Right cardiac atrium (tissue), 5 donors: ENCODE measurements at regions of chr1 and their contacts with region 1.

Region 1: DNA sequence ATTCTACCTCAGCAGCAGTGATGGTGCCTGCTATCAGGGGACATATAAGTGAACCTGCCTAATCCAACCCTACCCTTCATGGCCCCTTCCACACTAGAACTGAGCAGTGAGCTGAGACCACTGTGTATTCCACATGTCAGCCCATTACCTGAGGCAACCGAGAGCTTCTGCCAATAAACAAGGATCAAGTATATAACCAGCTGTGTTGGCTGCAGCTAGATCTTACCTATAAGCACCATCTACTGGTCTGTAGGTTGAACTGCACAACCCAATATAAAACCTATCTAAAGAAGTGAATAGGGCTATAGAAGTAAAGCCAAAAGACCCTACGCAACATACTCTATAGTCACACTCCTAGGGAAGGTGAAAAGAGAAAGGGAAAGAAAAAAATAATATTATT is 376.9 kb downstream of the HHIPL2 start:
- DNase-seq: no peak
- ATAC-seq: peak in 1 of 2 donors; percentile 38
- H3K4me3 ChIP-seq: no peak overlapping the region
- H3K27ac ChIP-seq: no peak overlapping the region
- H3K4me1 ChIP-seq: no peaks in the 10 kb centered on the region
- H3K27me3 ChIP-seq: no peaks in the 10 kb centered on the region

Region 2: DNA sequence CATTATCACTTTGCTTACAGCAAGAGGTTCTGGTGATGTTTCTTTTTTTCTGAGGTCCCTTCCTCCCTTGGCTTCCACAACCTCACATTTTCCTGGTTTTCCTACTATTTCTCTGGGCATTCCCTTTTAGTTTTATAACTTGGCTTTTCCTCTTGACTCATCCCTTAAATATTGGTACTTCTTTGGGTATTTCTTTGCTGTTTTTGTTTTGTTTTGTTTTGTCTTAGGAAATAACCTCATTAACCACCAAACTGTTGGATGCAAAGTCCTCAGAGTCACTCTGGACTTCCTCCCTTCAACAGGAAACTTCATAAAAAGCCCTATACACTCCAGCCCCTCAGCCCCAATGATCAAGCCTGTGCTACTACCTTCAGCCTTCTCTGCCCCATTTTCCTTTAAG is 640.2 kb before region 1 on chr1:
- intact Hi-C with region 1: loop called in 1 of 4 experiments (anchors 10 kb)
- DNase-seq: no peak
- ATAC-seq: no peak
- H3K4me3 ChIP-seq: no peak overlapping the region
- H3K27ac ChIP-seq: no peak overlapping the region
- H3K4me1 ChIP-seq: peaks cover 1% of the 10 kb centered on the region
- H3K27me3 ChIP-seq: no peaks in the 10 kb centered on the region

Region 3: GRCh38 chr1:221543529-221544120 is 627.4 kb before region 1 on chr1:
- intact Hi-C with region 1: loop called in 2 of 4 experiments (anchors 10 kb)
- DNase-seq: no peak
- ATAC-seq: no peak
- H3K4me3 ChIP-seq: no peak overlapping the region
- H3K27ac ChIP-seq: no peak overlapping the region
- H3K4me1 ChIP-seq: no peaks in the 10 kb centered on the region
- H3K27me3 ChIP-seq: no peaks in the 10 kb centered on the region

Region 4: GRCh38 chr1:221741711-221742554 is 429.1 kb before region 1 on chr1 and contains the start of gene DUSP10:
- intact Hi-C with region 1: loop called in 1 of 4 experiments (anchors 10 kb)
- DNase-seq: peak; percentile 98 to 99 (median 99)
- ATAC-seq: peak; percentile 97 to 98
- H3K4me3 ChIP-seq: peak within 1 kb of the TSS; percentile 72
- H3K27ac ChIP-seq: peak within 1 kb of the TSS; percentile 86
- H3K4me1 ChIP-seq: peaks cover 1% of the 10 kb centered on the region
- H3K27me3 ChIP-seq: no peaks in the 10 kb centered on the region
- total RNA-seq, gene DUSP10: 4.6 to 5.1 (median 4.9) TPM

Region 5: GRCh38 chr1:222109836-222110235 is 61.2 kb before region 1 on chr1:
- intact Hi-C with region 1: loop called in 1 of 4 experiments (anchors 10 kb)
- DNase-seq: no peak
- ATAC-seq: no peak
- H3K4me3 ChIP-seq: no peak overlapping the region
- H3K27ac ChIP-seq: no peak overlapping the region
- H3K4me1 ChIP-seq: no peaks in the 10 kb centered on the region
- H3K27me3 ChIP-seq: no peaks in the 10 kb centered on the region

Region 6: DNA sequence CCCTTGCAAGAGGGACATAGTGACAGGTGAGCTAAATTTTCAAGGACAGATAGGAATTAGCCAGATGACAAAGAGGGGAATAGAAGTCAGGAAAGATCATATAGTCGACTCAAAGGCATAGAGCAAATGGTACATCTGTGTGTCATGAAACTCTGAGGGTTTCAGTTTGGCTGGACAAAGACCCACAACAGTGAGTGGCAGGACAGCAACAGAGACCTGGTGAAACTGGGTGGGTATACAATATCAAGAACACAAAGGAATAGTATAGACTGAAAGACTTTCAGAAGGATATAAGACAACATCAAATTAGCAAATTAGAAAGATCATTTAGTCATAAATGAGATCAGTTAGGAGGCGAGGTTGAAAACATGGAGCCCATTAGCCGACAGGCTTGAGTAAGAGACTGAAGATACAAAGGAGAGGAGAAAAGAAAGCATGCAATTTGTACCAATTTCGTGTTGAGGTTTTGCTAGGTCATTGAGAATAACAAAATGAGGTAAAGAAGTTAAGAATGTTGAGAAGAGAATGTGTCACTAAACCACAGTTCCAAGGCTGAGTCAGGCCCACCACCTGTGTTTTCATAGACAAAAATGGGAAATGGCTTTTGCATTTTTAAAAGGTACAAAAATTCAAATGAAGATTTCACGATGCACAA is 163.1 kb after region 1 on chr1:
- intact Hi-C with region 1: no loop called
- DNase-seq: no peak
- ATAC-seq: no peak
- H3K4me3 ChIP-seq: no peak overlapping the region
- H3K27ac ChIP-seq: no peak overlapping the region
- H3K4me1 ChIP-seq: no peaks in the 10 kb centered on the region
- H3K27me3 ChIP-seq: no peaks in the 10 kb centered on the region

Region 7: GRCh38 chr1:222455188-222455879 is 284.3 kb after region 1 on chr1:
- intact Hi-C with region 1: no loop called
- DNase-seq: peak; percentile 81 to 94 (median 89)
- ATAC-seq: peak; percentile 95
- H3K4me3 ChIP-seq: no peak overlapping the region
- H3K27ac ChIP-seq: no peak overlapping the region
- H3K4me1 ChIP-seq: peaks cover 2% of the 10 kb centered on the region
- H3K27me3 ChIP-seq: no peaks in the 10 kb centered on the region